ENCODE measurements at regions of chr1 and their contacts with region 1.

Region 1: DNA sequence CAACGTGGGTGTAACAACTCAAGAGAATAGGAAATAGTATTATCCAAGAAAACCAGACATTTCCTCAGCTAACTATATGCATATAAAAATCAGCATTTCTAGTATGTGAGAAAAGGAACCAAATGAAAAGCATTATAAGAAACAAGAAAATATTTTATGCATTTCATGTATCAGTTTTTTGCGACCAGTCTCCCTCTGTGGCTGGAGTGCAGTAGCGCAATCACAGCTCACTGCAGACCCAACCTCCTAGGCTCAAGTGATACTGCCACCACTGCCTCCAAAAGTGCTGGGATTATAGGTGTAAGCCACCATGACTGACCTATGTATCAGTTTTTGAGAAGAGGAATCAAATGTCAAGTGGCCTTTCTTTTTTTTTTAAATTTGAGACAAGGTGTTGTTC is 31.0 kb downstream of the SLC16A1 start:
- DNase-seq: peak; percentile 42
- H3K4me3 Mint-ChIP-seq: no peak overlapping the region
- H3K27ac Mint-ChIP-seq: no peak overlapping the region
- H3K4me1 Mint-ChIP-seq: peaks cover 8% of the 10 kb centered on the region
- H3K27me3 Mint-ChIP-seq: no peaks in the 10 kb centered on the region

Region 2: GRCh38 chr1:112840631-112841624 is 84.1 kb before region 1 on chr1:
- intact Hi-C with region 1: no loop called
- DNase-seq: peak; percentile 74
- H3K4me3 Mint-ChIP-seq: peak overlapping the region; percentile 25
- H3K27ac Mint-ChIP-seq: no peak overlapping the region
- H3K4me1 Mint-ChIP-seq: peaks cover 13% of the 10 kb centered on the region
- H3K27me3 Mint-ChIP-seq: peaks cover 23% of the 10 kb centered on the region

Region 3: DNA sequence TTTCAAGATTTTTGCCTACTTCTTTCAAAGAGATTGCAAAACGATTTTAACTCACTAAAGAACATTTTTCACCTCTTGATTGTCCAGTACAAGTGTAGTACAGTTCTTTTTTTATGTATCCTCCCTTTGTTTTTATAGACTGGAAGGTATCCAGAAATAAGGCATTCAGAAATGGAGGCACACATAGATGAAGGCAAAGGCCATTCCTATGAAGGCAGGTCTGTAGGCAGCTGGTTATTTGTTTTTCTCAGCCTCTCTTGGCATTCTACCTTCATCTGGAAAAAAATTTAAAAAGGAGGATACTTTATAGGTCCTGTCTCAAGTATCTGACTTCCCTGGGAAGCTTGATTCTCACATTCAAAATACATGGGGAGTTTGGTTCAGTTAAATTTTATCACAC is 49.6 kb after region 1 on chr1:
- intact Hi-C with region 1: loop called (anchors 1 kb)
- DNase-seq: no peak
- H3K4me3 Mint-ChIP-seq: no peak overlapping the region
- H3K27ac Mint-ChIP-seq: no peak overlapping the region
- H3K4me1 Mint-ChIP-seq: no peaks in the 10 kb centered on the region
- H3K27me3 Mint-ChIP-seq: no peaks in the 10 kb centered on the region

Region 4: GRCh38 chr1:112998592-112999235 is 73.7 kb after region 1 on chr1:
- intact Hi-C with region 1: no loop called
- DNase-seq: no peak
- H3K4me3 Mint-ChIP-seq: no peak overlapping the region
- H3K27ac Mint-ChIP-seq: no peak overlapping the region
- H3K4me1 Mint-ChIP-seq: peaks cover 2% of the 10 kb centered on the region
- H3K27me3 Mint-ChIP-seq: no peaks in the 10 kb centered on the region